Ovary (tissue), 10 donors: ENCODE measurements at regions of chr11 and their contacts with region 1.

Region 1: DNA sequence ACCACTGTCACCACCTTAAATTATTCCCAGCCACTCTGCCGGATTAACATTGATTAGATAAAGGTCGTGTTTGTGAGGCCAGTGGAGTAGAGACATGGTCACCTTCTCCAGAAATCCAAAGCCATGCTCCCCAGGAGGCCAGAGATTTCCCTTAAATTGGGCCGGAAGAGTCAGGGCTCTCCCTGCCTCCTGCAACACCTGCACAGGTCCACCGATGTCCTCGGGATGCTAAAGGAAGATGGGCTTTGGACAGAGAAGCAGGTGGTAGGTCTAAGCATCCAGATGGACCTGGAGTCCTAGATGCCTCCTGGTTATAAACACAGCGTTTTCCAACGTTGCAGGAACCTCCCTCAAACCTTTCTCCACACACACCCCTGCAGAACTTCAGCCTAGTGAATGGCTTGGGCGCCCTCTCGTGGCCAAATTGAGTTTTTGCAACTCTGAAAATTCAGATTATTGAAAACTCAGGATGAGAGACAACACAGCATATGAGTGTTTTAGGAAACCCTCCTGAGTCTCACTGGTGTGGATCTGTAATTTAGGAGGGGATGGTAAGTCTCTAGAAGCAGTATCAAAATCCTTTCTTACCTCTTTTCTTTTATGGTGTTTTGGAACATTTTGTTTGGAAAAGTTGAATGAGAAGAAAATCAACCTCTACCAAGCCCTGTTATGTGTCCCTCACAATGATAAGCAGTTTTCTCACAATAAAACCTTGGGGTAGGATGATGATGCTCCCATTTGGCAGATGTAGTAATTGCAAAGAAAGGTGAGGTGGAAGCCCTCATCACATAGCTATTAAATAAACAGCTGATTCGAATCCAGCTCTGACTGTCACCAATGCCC is 109.6 kb downstream of the RRAS2 start:
- DNase-seq: peak; percentile 38 to 75 (median 72)
- H3K4me3 ChIP-seq: no peak overlapping the region
- H3K27ac ChIP-seq: no peak overlapping the region
- H3K4me1 ChIP-seq: peaks cover 6% of the 10 kb centered on the region
- H3K27me3 ChIP-seq: no peaks in the 10 kb centered on the region
- CTCF ChIP-seq: peak; percentile 56 to 89 (median 87)
- EP300 ChIP-seq: no peak
- POLR2A ChIP-seq: no peak

Region 2: GRCh38 chr11:13772223-13773046 is 476.9 kb before region 1 on chr11:
- intact Hi-C with region 1: loop called in 1 of 4 experiments (anchors 10 kb)
- DNase-seq: no peak
- H3K4me3 ChIP-seq: no peak overlapping the region
- H3K27ac ChIP-seq: no peak overlapping the region
- H3K4me1 ChIP-seq: no peaks in the 10 kb centered on the region
- H3K27me3 ChIP-seq: no peaks in the 10 kb centered on the region
- CTCF ChIP-seq: peak in 1 of 3 donors; percentile 18
- EP300 ChIP-seq: no peak
- POLR2A ChIP-seq: no peak